ENCODE measurements at regions of chr3 and their contacts with region 1.

Region 1: GRCh38 chr3:177359593-177360357 is 162.5 kb upstream of the TBL1XR1 start:
- DNase-seq: peak; percentile 89 to 98 (median 95)
- ATAC-seq: peak; percentile 83 to 90 (median 86)
- H3K4me3 ChIP-seq: peak overlapping the region; percentile 72 to 83
- H3K4me3 Mint-ChIP-seq: peak overlapping the region; percentile 82 to 89 (median 87)
- H3K27ac ChIP-seq: peak overlapping the region; percentile 98
- H3K27ac Mint-ChIP-seq: peak overlapping the region; percentile 98 to 99
- H3K4me1 ChIP-seq: peaks cover 25 to 39% of the 10 kb centered on the region in 2 experiments
- H3K4me1 Mint-ChIP-seq: peaks cover 51 to 57% (median 52%) of the 10 kb centered on the region in 3 donors
- H3K27me3 ChIP-seq: no peaks in the 10 kb centered on the region
- H3K27me3 Mint-ChIP-seq: peaks cover 0 to 1% of the 10 kb centered on the region in 2 donors

Region 2: DNA sequence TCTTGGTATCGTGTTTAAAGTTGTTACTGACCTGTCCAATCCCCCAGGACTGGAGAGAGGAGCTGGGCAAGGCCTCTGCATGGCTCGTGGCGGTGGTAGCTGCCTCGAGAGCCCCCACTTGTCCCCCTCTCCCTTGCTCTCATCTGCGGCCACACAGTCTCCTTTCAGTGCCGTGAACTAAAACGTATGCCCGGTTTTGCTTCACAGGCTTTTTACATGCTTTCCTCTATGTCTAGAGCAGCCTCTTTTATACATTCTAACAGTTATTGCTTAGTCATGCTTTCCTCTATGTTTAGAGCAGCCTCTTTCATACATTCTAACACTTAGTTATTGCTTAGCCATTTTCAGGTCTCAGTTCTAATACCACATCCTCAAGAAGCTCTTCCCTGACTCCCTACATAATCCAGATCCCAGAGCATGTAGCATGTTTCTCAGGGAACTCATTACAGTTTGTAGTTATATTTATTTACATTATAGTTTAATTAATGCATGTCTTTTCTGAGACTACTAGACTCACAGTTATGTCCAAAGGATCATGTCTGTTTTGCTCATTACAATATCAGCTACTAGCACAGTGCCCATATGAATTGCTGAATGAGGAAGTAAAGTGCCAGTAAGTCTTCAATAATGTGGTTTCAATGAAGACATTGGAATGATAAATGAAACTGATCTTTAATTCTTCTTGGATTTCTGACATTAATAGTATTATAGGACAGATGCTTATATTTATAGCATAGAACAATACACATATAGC is 96.0 kb before region 1 on chr3:
- CTCF ChIA-PET with region 1: no interaction called
- POLR2A ChIA-PET with region 1: interaction called in 1 of 2 experiments, 20 read pairs
- DNase-seq: no peak
- ATAC-seq: no peak
- H3K4me3 ChIP-seq: no peak overlapping the region
- H3K4me3 Mint-ChIP-seq: no peak overlapping the region
- H3K27ac ChIP-seq: no peak overlapping the region
- H3K27ac Mint-ChIP-seq: no peak overlapping the region
- H3K4me1 ChIP-seq: no peaks in the 10 kb centered on the region
- H3K4me1 Mint-ChIP-seq: no peaks in the 10 kb centered on the region
- H3K27me3 ChIP-seq: no peaks in the 10 kb centered on the region
- H3K27me3 Mint-ChIP-seq: no peaks in the 10 kb centered on the region